Activated naive CD4-positive, alpha-beta T cell treated with anti-CD3 and anti-CD28 coated beads for 36 hours (primary cell): ENCODE measurements at regions of chr2 and their contacts with region 1.

Region 1: DNA sequence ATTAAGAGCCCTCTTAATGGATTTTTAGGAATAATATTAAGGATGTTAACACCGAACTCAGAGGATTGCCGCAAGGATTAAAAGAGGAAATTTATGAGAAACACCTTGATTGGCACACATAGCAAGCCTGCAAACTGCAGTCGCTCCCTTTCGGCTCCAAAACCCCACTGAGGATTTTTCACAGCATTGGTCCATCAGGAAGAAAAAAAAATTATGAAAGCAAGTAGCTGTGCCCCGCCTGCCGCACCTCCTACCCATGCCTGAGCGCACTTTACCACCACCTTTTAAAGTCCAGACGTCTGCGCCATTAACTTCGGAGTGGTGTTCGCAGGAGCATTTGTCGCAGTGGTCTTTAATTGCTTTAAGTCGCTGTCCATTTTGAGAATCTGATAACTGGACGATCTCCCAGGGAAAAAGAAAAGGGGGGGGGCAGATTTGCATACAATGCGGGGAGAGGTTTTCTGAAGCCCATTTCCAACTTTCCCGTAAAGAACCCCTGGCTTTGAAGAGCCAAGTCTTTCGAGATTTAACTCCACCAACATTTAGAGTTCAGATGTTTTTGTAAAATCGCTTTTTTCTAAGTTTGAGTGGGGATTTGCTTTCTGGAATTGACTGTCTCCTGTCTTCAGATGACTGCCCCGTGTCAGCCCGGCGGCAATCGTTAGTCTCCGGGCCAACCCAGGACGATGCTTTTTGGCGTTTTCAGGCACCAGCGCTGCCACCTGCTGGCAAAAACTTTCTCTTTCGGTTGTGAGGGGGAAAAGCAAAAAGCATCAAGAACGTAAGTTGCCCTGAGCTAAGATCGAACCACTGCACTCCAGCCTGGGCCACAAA is 914 bp upstream of the TRABD2A start:
- DNase-seq: peak; percentile 97
- H3K4me3 Mint-ChIP-seq: peak overlapping the region; percentile 87
- H3K27ac Mint-ChIP-seq: peak overlapping the region; percentile 97
- H3K4me1 Mint-ChIP-seq: peaks cover 51% of the 10 kb centered on the region
- H3K27me3 Mint-ChIP-seq: no peaks in the 10 kb centered on the region

Region 2: DNA sequence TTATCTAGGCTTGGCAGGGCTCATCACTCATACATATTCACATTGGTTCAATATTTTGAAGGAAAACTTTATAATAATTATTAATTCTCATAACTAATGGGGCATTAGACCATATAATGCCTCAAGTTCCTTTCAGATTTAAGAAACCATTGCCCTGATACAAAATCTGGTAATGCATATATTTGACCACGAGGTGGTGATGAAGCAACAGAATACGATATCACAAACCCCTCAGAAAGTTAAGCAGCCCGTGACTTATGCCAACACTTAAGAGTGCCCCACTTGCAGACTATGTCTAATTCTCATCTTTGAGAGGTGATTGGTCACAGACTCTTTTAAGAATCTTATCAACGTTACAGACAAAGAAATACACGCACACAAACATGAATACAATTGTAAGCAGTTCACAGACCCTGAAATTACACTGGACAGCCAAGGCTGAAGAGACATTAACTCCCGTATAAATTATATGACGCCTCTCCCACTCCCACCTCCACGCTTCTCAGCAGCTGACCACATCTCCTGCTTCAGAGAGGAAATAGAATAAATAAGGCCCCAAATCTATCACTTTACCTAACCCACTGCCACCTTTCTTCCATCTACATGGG is 386.2 kb before region 1 on chr2:
- CTCF ChIA-PET with region 1: interaction called, 4 read pairs
- intact Hi-C with region 1: loop called (anchors 1 kb)
- DNase-seq: peak; percentile 45
- H3K4me3 Mint-ChIP-seq: no peak overlapping the region
- H3K27ac Mint-ChIP-seq: no peak overlapping the region
- H3K4me1 Mint-ChIP-seq: peaks cover 24% of the 10 kb centered on the region
- H3K27me3 Mint-ChIP-seq: no peaks in the 10 kb centered on the region

Region 3: DNA sequence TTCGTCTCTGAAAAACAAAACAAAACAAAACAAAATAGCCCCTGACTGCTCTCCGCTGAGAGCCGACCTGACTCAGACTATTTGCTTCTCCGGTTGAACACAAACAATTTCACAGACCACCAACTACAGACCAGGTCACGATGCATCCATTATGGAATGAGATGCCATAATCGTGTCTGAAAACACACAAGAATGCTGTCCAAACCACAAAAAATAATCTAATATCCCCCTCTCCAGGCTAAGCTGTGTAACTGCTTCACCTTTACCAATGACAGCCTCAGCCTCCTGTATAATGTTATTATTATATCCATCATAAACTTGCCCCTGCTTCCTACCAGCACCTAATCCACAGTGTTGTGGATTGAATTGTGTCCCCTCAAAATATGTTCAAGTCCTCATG is 250.8 kb before region 1 on chr2:
- CTCF ChIA-PET with region 1: interaction called, 3 read pairs
- intact Hi-C with region 1: loop called (anchors 5 kb)
- DNase-seq: no peak
- H3K4me3 Mint-ChIP-seq: no peak overlapping the region
- H3K27ac Mint-ChIP-seq: no peak overlapping the region
- H3K4me1 Mint-ChIP-seq: peaks cover 12% of the 10 kb centered on the region
- H3K27me3 Mint-ChIP-seq: no peaks in the 10 kb centered on the region

Region 4: DNA sequence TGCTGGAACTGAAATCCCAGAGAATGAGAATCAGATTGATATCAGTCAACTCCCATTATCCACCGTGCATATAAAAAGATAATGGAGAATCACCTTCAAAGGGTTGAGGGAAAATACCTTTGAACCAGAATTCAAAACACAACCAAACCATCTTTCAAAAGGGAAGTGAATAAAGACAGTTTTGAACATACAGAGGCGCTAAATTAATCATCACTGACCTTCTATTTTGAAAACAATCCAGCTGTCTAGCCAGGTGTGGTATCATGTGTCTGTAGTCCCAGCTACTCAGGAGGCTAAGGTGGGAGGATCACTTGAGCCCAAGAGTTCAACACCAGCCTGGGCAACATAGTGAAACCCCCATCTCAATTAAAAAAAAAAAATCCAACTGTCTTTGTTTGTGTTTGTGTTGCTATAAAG is 64.6 kb before region 1 on chr2:
- CTCF ChIA-PET with region 1: interaction called, 3 read pairs
- intact Hi-C with region 1: loop called (anchors 1 kb)
- DNase-seq: peak; percentile 35
- H3K4me3 Mint-ChIP-seq: no peak overlapping the region
- H3K27ac Mint-ChIP-seq: peak overlapping the region; percentile 57
- H3K4me1 Mint-ChIP-seq: peaks cover 41% of the 10 kb centered on the region
- H3K27me3 Mint-ChIP-seq: no peaks in the 10 kb centered on the region

Region 5: GRCh38 chr2:84856787-84857186 is 25.0 kb before region 1 on chr2:
- CTCF ChIA-PET with region 1: interaction called, 12 read pairs
- intact Hi-C with region 1: no loop called
- DNase-seq: peak; percentile 76
- H3K4me3 Mint-ChIP-seq: peak overlapping the region; percentile 73
- H3K27ac Mint-ChIP-seq: peak overlapping the region; percentile 91
- H3K4me1 Mint-ChIP-seq: peaks cover 94% of the 10 kb centered on the region
- H3K27me3 Mint-ChIP-seq: no peaks in the 10 kb centered on the region

Region 6: GRCh38 chr2:84894758-84895520 is 13.1 kb after region 1 on chr2:
- CTCF ChIA-PET with region 1: interaction called, 10 read pairs
- intact Hi-C with region 1: loop called (anchors 2 kb)
- DNase-seq: peak; percentile 44
- H3K4me3 Mint-ChIP-seq: peak overlapping the region; percentile 59
- H3K27ac Mint-ChIP-seq: peak overlapping the region; percentile 91
- H3K4me1 Mint-ChIP-seq: peaks cover 60% of the 10 kb centered on the region
- H3K27me3 Mint-ChIP-seq: no peaks in the 10 kb centered on the region